Activated CD4-positive, alpha-beta T cell treated with anti-CD3 and anti-CD28 coated beads, Interleukin-2, amount 10 ng/mL, durations not matched to agents 24 days and 14 days (primary cell): ENCODE measurements at regions of chr9 and their contacts with region 1.

Region 1: DNA sequence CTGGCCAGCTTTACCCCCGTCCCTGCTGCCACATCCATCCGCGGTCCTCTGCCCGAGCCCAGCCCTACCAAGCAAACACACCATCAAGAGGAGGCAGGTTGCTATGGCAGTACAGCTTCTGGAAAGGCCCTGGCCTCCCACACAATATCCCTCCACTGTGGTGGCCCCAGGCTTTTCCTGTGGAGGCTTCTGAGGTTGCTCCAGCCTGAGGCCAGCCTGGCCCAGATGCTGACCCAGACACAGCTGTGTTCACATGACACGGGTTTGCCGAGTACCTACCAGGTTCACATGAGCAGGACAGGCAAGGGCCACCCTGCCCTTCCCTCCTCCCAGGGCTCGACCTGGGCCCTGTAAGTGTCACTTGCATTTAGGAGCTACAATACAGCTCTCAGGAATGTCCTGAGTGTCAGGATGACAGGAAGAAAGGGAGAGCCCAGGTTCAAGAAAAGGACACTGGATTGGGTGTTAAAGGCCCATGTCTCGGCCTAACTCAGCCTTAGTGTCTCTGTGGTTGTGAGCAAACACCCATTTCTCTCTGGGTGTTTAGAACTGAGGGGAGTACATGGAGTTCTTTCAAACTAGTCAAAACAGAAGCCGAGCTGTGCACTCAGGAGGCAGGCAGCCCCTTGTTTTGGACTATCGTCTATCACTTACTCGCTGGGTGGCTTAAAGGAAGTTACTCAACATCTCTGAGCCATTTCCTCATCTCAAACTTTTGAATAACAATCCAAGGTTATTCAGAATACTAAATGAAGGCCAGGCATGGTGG is 40.2 kb downstream of the NAIF1 start:
- DNase-seq: peak; percentile 85
- H3K4me3 Mint-ChIP-seq: peak overlapping the region; percentile 74
- H3K27ac Mint-ChIP-seq: peak overlapping the region; percentile 98
- H3K4me1 Mint-ChIP-seq: peaks cover 82% of the 10 kb centered on the region
- H3K27me3 Mint-ChIP-seq: no peaks in the 10 kb centered on the region

Region 2: DNA sequence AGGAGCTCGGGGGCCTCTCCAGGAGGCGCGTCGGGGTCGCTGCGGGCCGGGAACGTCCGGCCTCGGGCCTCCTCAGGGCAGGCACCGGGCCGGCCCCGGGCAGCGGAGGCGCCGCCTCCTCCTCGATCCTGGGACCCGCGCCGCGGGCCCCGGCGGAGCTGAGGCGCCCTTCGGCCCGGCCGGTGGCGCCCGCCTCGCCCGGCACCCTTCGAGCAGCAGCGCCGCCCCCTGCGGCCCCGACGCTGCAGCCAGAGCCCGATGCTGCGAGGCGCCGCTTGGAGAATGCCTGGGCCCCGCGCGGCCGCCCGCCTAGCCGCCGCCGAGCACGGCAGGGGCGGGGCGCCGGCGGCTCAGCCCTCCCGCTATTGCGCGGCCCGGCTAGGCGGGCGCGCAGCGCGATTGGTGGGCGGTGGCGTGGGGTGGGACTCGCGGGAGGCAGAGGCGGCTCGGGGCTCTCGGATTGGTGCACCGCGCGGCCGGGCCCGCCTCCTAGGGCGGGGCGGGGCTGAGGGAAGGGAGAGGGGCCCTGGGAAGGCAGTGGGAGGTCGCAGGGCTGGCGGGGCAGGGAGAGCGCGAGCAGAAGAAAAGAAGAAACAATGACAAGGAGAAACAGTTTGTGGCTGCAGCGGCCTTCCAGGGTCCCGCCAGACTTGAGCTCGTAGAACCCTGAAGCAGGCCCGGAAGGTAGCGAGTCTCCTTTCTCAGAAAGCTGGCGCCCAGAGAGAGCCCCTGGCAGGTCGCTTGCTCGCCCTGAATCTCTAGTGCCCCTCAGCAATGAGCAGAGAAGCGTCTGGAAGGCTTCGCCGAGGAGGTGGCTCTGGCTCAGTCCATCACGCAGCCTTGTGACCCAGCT is 46.0 kb before region 1 on chr9 and contains the start of gene EEIG1:
- intact Hi-C with region 1: loop called (anchors 1 kb)
- DNase-seq: peak; percentile 100
- H3K4me3 Mint-ChIP-seq: peak within 1 kb of the TSS; percentile 96
- H3K27ac Mint-ChIP-seq: peak within 1 kb of the TSS; percentile 94
- H3K4me1 Mint-ChIP-seq: peaks cover 53% of the 10 kb centered on the region
- H3K27me3 Mint-ChIP-seq: no peaks in the 10 kb centered on the region
- total RNA-seq, gene EEIG1: 56.1 and 64.4 TPM in 2 replicates

Region 3: GRCh38 chr9:128007566-128008138 is 19.3 kb before region 1 on chr9:
- intact Hi-C with region 1: loop called (anchors 1 kb)
- DNase-seq: peak; percentile 93
- H3K4me3 Mint-ChIP-seq: peak overlapping the region; percentile 80
- H3K27ac Mint-ChIP-seq: peak overlapping the region; percentile 93
- H3K4me1 Mint-ChIP-seq: peaks cover 35% of the 10 kb centered on the region
- H3K27me3 Mint-ChIP-seq: no peaks in the 10 kb centered on the region

Region 4: DNA sequence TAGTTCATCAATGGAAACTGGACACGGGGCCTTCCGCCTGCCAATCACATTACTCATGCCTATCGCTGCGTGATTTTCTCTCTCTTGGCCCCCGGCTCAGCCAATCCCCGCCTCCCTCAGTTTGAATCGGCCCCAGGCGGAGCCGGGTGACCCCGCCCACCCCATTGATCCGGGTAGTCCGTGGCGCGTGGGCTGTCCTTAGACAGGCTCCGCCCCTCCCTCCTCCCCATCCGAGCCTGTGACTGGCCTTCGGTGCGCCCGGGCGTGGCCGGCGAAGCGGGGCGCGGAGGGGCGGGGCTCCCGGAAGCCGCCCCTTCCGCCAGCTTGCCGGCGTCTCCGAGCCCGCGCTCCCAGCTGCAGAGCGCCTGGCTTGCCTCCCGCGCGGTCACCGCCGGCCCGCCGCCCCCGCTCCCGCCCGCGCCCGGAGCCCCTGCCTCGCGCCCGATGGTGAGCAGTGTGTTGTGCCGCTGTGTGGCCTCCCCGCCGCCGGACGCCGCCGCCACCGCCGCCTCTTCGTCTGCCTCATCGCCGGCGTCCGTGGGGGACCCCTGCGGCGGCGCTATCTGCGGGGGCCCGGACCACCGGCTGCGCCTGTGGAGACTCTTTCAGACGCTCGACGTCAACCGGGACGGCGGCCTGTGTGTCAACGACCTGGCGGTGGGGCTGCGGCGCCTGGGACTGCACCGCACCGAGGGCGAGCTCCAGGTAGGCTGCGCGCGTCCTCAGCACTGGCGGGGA is 41.1 kb after region 1 on chr9 and contains the start of gene SLC25A25:
- intact Hi-C with region 1: loop called (anchors 1 kb)
- DNase-seq: peak; percentile 100
- H3K4me3 Mint-ChIP-seq: peak within 1 kb of the TSS; percentile 93
- H3K27ac Mint-ChIP-seq: peak within 1 kb of the TSS; percentile 84
- H3K4me1 Mint-ChIP-seq: peaks cover 43% of the 10 kb centered on the region
- H3K27me3 Mint-ChIP-seq: no peaks in the 10 kb centered on the region
- total RNA-seq, gene SLC25A25: 12.2 and 14.0 TPM in 2 replicates

Region 5: GRCh38 chr9:128117613-128118471 is 90.9 kb after region 1 on chr9:
- intact Hi-C with region 1: loop called (anchors 5 kb)
- DNase-seq: peak; percentile 99
- H3K4me3 Mint-ChIP-seq: no peak overlapping the region
- H3K27ac Mint-ChIP-seq: peak overlapping the region; percentile 29
- H3K4me1 Mint-ChIP-seq: peaks cover 9% of the 10 kb centered on the region
- H3K27me3 Mint-ChIP-seq: no peaks in the 10 kb centered on the region